Mammary epithelial cell (primary cell): ENCODE measurements at regions of chr17 and their contacts with region 1.

Region 1: DNA sequence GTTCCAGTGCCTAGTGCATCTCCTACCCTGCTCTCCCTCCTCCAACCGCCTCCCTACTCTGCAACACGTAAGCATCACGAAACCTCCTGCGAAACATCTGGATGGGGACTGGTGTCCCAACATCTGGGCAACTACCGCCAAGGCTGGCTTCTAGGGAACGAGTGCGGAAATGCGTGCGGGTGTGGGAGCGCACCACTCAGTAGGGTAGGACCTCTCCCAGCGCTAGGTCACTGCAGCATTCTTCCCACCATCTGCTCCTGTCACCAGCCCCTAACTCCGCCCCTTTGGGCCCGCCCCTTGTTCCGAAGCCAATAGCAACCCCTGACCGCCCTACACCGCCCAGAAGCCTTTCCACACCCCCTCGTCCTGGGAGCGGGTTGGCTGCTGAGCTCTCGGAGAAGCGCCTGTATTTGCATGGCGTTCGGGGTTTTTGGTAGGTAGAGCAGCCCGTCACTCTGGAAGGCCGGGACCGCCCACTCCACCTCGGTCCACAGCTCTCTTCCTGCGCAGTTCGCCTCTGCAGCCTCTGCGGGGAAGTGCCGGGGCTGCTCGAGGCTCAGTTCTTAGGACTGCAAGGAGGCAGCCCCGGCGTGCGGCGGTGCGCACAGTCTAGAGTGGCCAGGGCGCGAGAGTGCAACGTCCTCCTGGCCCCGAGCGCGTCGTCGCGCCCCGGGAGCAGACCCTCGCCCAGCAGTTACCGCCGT is at the start of gene HS3ST3B1:
- DNase-seq: peak; percentile 99
- H3K4me3 ChIP-seq: peak within 1 kb of the TSS; percentile 58 to 73 (median 69)
- H3K27ac ChIP-seq: peak within 1 kb of the TSS; percentile 34
- H3K4me1 ChIP-seq: peaks cover 32% of the 10 kb centered on the region
- H3K27me3 ChIP-seq: peaks cover 23% of the 10 kb centered on the region
- CTCF ChIP-seq: no peak
- total RNA-seq, gene HS3ST3B1: 4.0 to 14.7 TPM

Region 2: DNA sequence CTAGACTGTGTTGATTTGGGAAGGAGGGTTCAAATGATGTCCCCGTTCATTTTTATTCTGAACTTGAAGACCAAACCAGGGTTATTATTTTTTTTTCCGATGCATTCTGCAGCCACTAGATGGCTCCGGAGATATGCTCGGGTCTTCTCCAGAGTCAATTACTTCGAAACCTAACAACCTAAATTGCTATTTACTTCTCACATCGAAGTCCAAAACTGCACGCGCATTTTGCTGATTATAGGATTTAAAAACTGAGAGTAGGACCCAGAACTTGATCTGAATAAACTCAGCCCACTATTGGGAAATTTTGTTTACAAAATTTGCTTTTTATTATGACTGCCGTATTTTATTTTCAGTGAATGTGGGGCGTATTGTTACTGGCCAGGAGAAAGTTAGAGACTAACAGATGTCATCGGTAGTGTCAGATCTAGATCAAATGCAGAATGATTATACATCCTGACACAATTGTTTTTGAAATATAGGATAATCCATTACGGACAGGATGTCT is 962.8 kb before region 1 on chr17:
- CTCF ChIA-PET with region 1: no interaction called
- dilution Hi-C with region 1: no loop called
- in situ Hi-C with region 1: loop called in 1 of 2 experiments (anchors 25 kb)
- intact Hi-C with region 1: loop called (anchors 1 kb)
- DNase-seq: peak; percentile 43
- H3K4me3 ChIP-seq: peak overlapping the region; percentile 11 to 47 (median 46)
- H3K27ac ChIP-seq: peak overlapping the region; percentile 34
- H3K4me1 ChIP-seq: peaks cover 4% of the 10 kb centered on the region
- H3K27me3 ChIP-seq: no peaks in the 10 kb centered on the region
- CTCF ChIP-seq: peak; percentile 77 to 85

Region 3: GRCh38 chr17:13931800-13932460 is 368.8 kb before region 1 on chr17:
- CTCF ChIA-PET with region 1: no interaction called
- dilution Hi-C with region 1: no loop called
- in situ Hi-C with region 1: no loop called
- intact Hi-C with region 1: loop called (anchors 10 kb)
- DNase-seq: peak; percentile 35
- H3K4me3 ChIP-seq: no peak overlapping the region
- H3K27ac ChIP-seq: no peak overlapping the region
- H3K4me1 ChIP-seq: no peaks in the 10 kb centered on the region
- H3K27me3 ChIP-seq: no peaks in the 10 kb centered on the region
- CTCF ChIP-seq: no peak

Region 4: DNA sequence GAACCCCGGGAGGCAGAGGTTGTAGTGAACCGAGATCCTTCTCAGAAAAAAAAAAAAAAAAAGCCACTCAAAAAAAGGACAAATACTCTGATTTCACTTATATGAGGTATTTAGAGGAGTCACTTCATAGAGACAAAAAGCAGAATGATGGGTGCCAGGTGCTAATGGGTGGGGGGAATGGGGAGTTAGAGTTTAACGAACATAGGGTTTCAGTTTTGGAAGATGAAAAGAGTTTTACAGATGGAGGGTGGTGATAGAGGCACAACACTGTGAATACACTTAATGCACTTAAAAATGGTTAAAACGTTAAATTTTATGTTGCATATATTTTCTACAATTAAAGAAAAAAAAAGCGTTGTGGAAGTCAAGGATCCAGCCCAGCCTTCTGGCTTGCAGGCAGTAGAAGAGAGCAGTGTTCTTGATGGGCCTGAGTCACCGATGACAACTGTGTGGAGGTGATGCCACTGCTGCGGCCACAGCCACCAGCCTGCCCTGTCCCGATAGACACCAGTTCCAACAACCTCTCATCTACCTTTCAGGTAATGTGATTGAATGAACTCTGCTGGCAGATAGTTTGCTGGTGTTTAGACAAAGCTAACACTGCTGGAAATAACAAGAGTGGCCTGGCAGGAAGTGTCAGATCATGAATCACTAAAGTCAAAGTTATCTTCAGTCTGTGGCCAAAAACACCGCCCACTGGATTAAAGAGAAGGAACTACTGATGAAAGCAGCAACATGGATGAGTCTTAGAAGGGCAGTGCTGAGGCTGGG is 281.4 kb before region 1 on chr17:
- CTCF ChIA-PET with region 1: no interaction called
- dilution Hi-C with region 1: no loop called
- in situ Hi-C with region 1: no loop called
- intact Hi-C with region 1: no loop called
- DNase-seq: peak; percentile 10
- H3K4me3 ChIP-seq: no peak overlapping the region
- H3K27ac ChIP-seq: no peak overlapping the region
- H3K4me1 ChIP-seq: no peaks in the 10 kb centered on the region
- H3K27me3 ChIP-seq: no peaks in the 10 kb centered on the region
- CTCF ChIP-seq: no peak

Region 5: GRCh38 chr17:14245629-14246028 is 55.1 kb before region 1 on chr17:
- CTCF ChIA-PET with region 1: interaction called, 12 read pairs
- dilution Hi-C with region 1: no loop called
- in situ Hi-C with region 1: no loop called
- intact Hi-C with region 1: no loop called
- DNase-seq: no peak
- H3K4me3 ChIP-seq: no peak overlapping the region
- H3K27ac ChIP-seq: no peak overlapping the region
- H3K4me1 ChIP-seq: no peaks in the 10 kb centered on the region
- H3K27me3 ChIP-seq: no peaks in the 10 kb centered on the region
- CTCF ChIP-seq: no peak

Region 6: GRCh38 chr17:14942526-14943190 is 641.9 kb after region 1 on chr17:
- CTCF ChIA-PET with region 1: no interaction called
- dilution Hi-C with region 1: no loop called
- in situ Hi-C with region 1: loop called in 1 of 2 experiments (anchors 25 kb)
- intact Hi-C with region 1: loop called (anchors 5 kb)
- DNase-seq: peak; percentile 92
- H3K4me3 ChIP-seq: no peak overlapping the region
- H3K27ac ChIP-seq: no peak overlapping the region
- H3K4me1 ChIP-seq: peaks cover 18% of the 10 kb centered on the region
- H3K27me3 ChIP-seq: peaks cover 28% of the 10 kb centered on the region
- CTCF ChIP-seq: no peak